A549 (cell line): ENCODE measurements at regions of chr1 and their contacts with region 1.

Region 1: GRCh38 chr1:212608209-212608955 is at the start of gene ATF3:
- DNase-seq: peak; percentile 94 to 98
- ATAC-seq: peak; percentile 82 to 84
- H3K4me3 ChIP-seq: peak within 1 kb of the TSS; percentile 90
- H3K27ac ChIP-seq: peak within 1 kb of the TSS; percentile 88 to 93
- H3K4me1 ChIP-seq: peaks cover 23% of the 10 kb centered on the region; the same call in 2 of the 3 replicates
- CTCF ChIP-seq: no peak
- EP300 ChIP-seq: peak in 1 of 2 experiments; percentile 65; a peak in 2 of 5 replicates
- POLR2A ChIP-seq: peak; percentile 99
- RAD21 ChIP-seq: no peak; a peak in 2 of 5 replicates
- polyA plus RNA-seq, gene ATF3: 33.4 and 62.9 TPM in 2 replicates

Region 2: DNA sequence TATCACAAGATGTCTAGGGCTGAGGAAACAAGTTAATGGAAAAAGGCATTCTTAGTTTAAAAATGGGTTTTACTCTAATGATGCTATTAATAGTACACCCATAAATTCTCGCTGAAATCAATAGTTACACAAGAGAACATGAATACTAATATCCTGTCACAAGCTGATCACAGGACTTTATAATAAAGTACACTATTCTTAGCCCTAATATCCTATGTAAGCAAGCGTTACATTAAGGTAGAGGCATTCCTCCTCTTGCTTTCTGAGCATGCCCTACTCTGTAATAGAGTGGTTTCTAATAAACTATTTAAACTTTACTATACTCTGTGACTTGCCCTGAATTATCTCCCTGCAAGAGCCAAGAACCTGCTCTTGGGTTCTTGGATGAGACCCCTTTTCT is 187.2 kb before region 1 on chr1:
- CTCF ChIA-PET with region 1: no interaction called
- POLR2A ChIA-PET with region 1: no interaction called
- DNase-seq: no peak
- ATAC-seq: no peak
- H3K4me3 ChIP-seq: no peak overlapping the region
- H3K27ac ChIP-seq: no peak overlapping the region
- H3K4me1 ChIP-seq: no peaks in the 10 kb centered on the region
- CTCF ChIP-seq: no peak
- EP300 ChIP-seq: no peak
- POLR2A ChIP-seq: no peak
- RAD21 ChIP-seq: no peak

Region 3: GRCh38 chr1:212482384-212483281 is 125.7 kb before region 1 on chr1:
- CTCF ChIA-PET with region 1: interaction called, 47 read pairs
- POLR2A ChIA-PET with region 1: interaction called, 72 read pairs
- DNase-seq: peak; percentile 31 to 84
- ATAC-seq: peak in 1 of 2 experiments; percentile 31; a peak in 3 of 6 replicates
- H3K4me3 ChIP-seq: no peak overlapping the region
- H3K27ac ChIP-seq: peak overlapping the region; percentile 75 to 86
- H3K4me1 ChIP-seq: peaks cover 72% of the 10 kb centered on the region
- CTCF ChIP-seq: no peak
- EP300 ChIP-seq: 0 out of 5 replicates have a peak, but pooled peaks of 1 of the 2 experiments have one; percentile 24
- POLR2A ChIP-seq: no peak
- RAD21 ChIP-seq: no peak

Region 4: DNA sequence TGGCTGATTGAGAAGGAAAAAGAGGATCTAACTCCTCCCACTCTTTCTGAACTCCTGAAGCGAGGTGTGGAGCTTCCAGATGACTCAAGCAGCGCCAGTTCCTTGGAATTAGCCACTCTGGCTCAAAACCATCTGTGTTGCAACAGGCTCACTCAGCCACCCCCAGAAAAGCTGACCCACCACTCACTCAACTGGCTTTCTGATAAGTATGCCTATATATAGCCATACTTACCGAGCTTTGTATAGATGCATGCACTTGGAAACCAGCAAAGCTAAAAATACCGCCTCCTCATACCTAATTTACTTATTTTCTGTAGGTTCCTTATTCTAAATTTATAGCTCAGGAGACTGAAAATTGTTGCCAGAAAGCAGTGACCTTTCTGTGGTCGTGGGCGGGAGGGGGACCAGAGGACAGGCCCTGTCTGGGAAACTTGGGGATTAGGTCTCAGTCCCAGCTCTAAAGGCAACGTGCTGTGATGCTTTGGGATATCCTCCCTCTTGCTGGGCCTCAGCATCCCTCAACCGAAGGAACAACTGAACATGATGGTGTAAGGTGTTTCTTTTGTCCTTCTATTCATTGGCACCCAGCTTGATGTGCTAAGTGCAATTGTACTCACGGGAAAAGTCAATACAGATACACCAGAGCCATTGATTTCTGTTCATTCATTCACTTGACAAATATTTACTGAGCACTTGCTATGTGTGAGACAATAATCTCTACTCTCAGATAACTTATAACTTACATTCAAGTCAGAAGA is 109.9 kb before region 1 on chr1:
- CTCF ChIA-PET with region 1: no interaction called
- POLR2A ChIA-PET with region 1: interaction called, 10 read pairs
- DNase-seq: peak in 1 of 2 experiments; percentile 35
- ATAC-seq: peak in 1 of 2 experiments; percentile 32; a peak in 2 of 6 replicates
- H3K4me3 ChIP-seq: no peak overlapping the region
- H3K27ac ChIP-seq: peak overlapping the region in 1 of 2 experiments; percentile 33; a peak in 2 of 6 replicates
- H3K4me1 ChIP-seq: peaks cover 8% of the 10 kb centered on the region; the same call in 1 of the 3 replicates
- CTCF ChIP-seq: no peak
- EP300 ChIP-seq: no peak
- POLR2A ChIP-seq: no peak
- RAD21 ChIP-seq: no peak

Region 5: GRCh38 chr1:212566522-212567479 is 41.6 kb before region 1 on chr1:
- CTCF ChIA-PET with region 1: interaction called, 4 read pairs
- POLR2A ChIA-PET with region 1: interaction called, 14 read pairs
- DNase-seq: peak; percentile 66 to 72
- ATAC-seq: peak; percentile 80 to 89
- H3K4me3 ChIP-seq: peak overlapping the region; percentile 52
- H3K27ac ChIP-seq: peak overlapping the region; percentile 78 to 84
- H3K4me1 ChIP-seq: peaks cover 15% of the 10 kb centered on the region
- CTCF ChIP-seq: no peak
- EP300 ChIP-seq: no peak
- POLR2A ChIP-seq: no peak
- RAD21 ChIP-seq: no peak

Region 6: DNA sequence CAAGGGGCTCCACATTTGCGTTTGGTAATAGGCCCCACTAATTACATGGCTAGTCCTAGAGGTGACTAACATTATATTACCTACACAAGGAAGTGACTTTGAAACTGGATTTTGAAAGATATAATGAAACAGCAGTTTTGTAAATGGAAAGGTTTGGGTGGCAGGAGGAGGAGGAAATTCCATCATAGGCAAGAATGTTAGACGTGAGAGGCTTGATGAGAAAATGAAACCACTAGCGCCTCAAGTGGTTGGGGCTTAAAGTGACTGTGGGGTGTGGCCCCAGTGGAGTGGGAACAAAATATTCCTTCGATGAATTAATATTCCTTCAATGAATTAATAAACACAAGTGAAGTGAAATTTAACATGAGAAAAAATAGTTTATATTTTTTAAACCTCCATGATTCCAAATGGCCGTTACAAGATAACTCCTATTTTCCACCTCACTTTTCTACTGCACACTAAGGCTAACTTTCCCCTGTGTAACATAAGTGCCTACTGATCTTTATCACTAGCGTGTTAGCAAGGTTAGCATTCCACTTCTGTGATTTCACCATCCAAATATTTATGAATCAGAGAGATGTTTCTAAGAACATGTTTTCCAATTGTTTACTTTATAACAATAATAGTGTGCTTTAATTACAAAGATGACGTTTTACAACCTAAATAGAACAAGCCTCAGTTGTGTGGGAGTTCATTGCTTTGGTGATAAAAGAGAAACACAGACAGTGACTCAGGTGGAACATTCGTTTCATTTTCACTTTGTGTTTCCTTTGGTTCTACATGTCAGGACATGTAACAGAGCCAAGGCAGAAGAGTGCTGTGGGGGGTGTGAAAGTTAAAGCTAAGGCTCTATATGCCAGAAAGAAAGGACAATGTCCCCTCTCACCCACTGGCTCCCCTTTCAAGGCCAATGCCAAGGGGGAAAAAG is 12.3 kb before region 1 on chr1:
- CTCF ChIA-PET with region 1: interaction called, 14 read pairs
- POLR2A ChIA-PET with region 1: interaction called, 67 read pairs
- DNase-seq: peak; percentile 62 to 85
- ATAC-seq: peak; percentile 86 to 87
- H3K4me3 ChIP-seq: no peak overlapping the region; the same call in 2 of the 3 replicates
- H3K27ac ChIP-seq: peak overlapping the region; percentile 79 to 84
- H3K4me1 ChIP-seq: peaks cover 31% of the 10 kb centered on the region
- CTCF ChIP-seq: peak; percentile 69
- EP300 ChIP-seq: peak; percentile 57 to 60; a peak in 3 of 5 replicates
- POLR2A ChIP-seq: no peak
- RAD21 ChIP-seq: peak; percentile 49 to 64; a peak in 4 of 5 replicates